CD8-positive, alpha-beta T cell (primary cell): ENCODE measurements at regions of chr17 and their contacts with region 1.

Region 1: GRCh38 chr17:30021708-30022317 is 80.4 kb downstream of the EFCAB5 start:
- DNase-seq: peak in 6 of 9 experiments; percentile 3 to 68 (median 31)
- ATAC-seq: peak; percentile 76
- H3K4me3 ChIP-seq: no peak overlapping the region
- H3K4me3 Mint-ChIP-seq: no peak overlapping the region
- H3K27ac ChIP-seq: no peak overlapping the region
- H3K27ac Mint-ChIP-seq: no peak overlapping the region
- H3K4me1 ChIP-seq: no peaks in the 10 kb centered on the region
- H3K4me1 Mint-ChIP-seq: peaks cover 2% of the 10 kb centered on the region
- H3K27me3 ChIP-seq: no peaks in the 10 kb centered on the region
- H3K27me3 Mint-ChIP-seq: peaks cover 5% of the 10 kb centered on the region
- CTCF ChIP-seq: peak; percentile 88

Region 2: DNA sequence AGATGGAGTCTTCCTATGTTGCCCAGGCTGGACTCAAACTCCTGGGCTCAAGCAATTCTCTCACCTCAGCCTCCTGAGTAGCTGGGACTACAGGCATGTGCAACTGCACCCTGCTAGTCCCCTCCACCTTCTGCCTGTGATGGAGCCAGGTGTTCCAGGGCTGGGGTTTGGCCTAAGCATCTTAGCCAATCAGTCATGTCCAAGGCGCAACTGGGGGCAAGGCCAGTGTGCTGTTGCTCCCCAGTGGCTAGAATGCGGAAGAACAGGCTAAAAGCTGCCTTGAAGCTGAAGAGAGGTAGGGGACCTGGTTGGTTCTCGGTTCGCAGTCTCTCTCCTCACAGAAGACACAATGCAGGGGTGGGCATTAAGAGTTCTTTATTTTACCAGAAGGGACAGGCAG is 1142.8 kb before region 1 on chr17:
- CTCF ChIA-PET with region 1: no interaction called
- POLR2A ChIA-PET with region 1: no interaction called
- intact Hi-C with region 1: no loop called
- DNase-seq: peak in 1 of 9 experiments; percentile 26
- ATAC-seq: no peak
- H3K4me3 ChIP-seq: no peak overlapping the region
- H3K4me3 Mint-ChIP-seq: no peak overlapping the region
- H3K27ac ChIP-seq: no peak overlapping the region
- H3K27ac Mint-ChIP-seq: no peak overlapping the region
- H3K4me1 ChIP-seq: no peaks in the 10 kb centered on the region
- H3K4me1 Mint-ChIP-seq: no peaks in the 10 kb centered on the region
- H3K27me3 ChIP-seq: no peaks in the 10 kb centered on the region
- H3K27me3 Mint-ChIP-seq: no peaks in the 10 kb centered on the region
- CTCF ChIP-seq: no peak

Region 3: DNA sequence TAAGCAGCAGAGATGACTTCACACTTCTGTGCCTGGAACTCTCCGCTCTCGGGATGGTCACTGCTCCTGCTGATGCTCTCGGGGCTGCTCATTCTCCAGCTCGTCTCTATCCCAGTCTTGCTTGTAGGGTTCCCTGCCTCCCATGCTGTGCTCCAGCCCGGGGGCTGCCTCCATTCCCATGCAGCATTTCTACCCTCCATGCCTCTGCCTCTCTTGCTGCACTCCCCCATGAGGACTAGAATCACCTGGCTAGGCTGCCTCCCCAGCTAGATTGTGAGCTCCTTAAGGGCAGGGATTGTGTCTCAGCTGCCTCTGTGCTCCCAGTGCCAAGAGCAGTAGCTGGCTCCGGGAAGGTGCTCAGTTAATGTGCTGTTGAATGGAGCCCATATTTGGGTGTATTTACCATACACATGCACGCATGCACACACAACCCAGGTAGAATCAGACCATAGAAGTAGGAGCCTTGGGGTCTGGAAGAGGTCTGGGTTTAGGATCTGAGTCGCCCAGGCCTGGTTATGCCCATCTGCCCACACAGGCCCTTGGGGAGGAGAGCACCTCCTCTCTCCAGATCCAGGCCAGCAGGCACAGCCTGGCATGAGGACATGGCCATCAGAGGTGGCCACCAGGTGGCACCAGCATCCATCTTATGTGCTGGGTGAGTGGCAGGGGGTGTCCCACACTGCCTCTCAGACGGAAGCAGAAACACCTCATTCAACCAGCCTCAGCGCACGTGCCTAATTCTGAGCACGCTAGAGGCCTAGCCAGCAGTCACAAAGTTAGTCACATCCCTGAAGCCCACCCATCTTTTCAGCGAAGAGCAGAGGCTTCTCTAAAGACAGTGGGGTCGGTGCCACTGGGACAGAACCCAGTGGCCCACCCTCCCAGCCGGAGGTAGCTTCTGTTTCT is 441.7 kb before region 1 on chr17:
- CTCF ChIA-PET with region 1: no interaction called
- POLR2A ChIA-PET with region 1: no interaction called
- intact Hi-C with region 1: loop called (anchors 1 to 2 kb)
- DNase-seq: peak; percentile 81 to 95 (median 92)
- ATAC-seq: peak; percentile 99
- H3K4me3 ChIP-seq: no peak overlapping the region
- H3K4me3 Mint-ChIP-seq: no peak overlapping the region
- H3K27ac ChIP-seq: no peak overlapping the region
- H3K27ac Mint-ChIP-seq: peak overlapping the region; percentile 34
- H3K4me1 ChIP-seq: peaks cover 13% of the 10 kb centered on the region
- H3K4me1 Mint-ChIP-seq: peaks cover 11% of the 10 kb centered on the region
- H3K27me3 ChIP-seq: no peaks in the 10 kb centered on the region
- H3K27me3 Mint-ChIP-seq: no peaks in the 10 kb centered on the region
- CTCF ChIP-seq: peak; percentile 80

Region 4: GRCh38 chr17:29640413-29640812 is 381.4 kb before region 1 on chr17:
- CTCF ChIA-PET with region 1: interaction called, 3 read pairs
- POLR2A ChIA-PET with region 1: no interaction called
- intact Hi-C with region 1: loop called in 1 of 2 experiments (anchors 2 kb)
- DNase-seq: no peak
- ATAC-seq: no peak
- H3K4me3 ChIP-seq: no peak overlapping the region
- H3K4me3 Mint-ChIP-seq: no peak overlapping the region
- H3K27ac ChIP-seq: no peak overlapping the region
- H3K27ac Mint-ChIP-seq: peak overlapping the region; percentile 61
- H3K4me1 ChIP-seq: no peaks in the 10 kb centered on the region
- H3K4me1 Mint-ChIP-seq: peaks cover 17% of the 10 kb centered on the region
- H3K27me3 ChIP-seq: no peaks in the 10 kb centered on the region
- H3K27me3 Mint-ChIP-seq: no peaks in the 10 kb centered on the region
- CTCF ChIP-seq: no peak

Region 5: GRCh38 chr17:29844339-29845048 is 177.3 kb before region 1 on chr17:
- CTCF ChIA-PET with region 1: no interaction called
- POLR2A ChIA-PET with region 1: no interaction called
- intact Hi-C with region 1: no loop called
- DNase-seq: peak in 1 of 9 experiments; percentile 6
- ATAC-seq: no peak
- H3K4me3 ChIP-seq: no peak overlapping the region
- H3K4me3 Mint-ChIP-seq: no peak overlapping the region
- H3K27ac ChIP-seq: no peak overlapping the region
- H3K27ac Mint-ChIP-seq: no peak overlapping the region
- H3K4me1 ChIP-seq: no peaks in the 10 kb centered on the region
- H3K4me1 Mint-ChIP-seq: no peaks in the 10 kb centered on the region
- H3K27me3 ChIP-seq: no peaks in the 10 kb centered on the region
- H3K27me3 Mint-ChIP-seq: no peaks in the 10 kb centered on the region
- CTCF ChIP-seq: no peak

Region 6: GRCh38 chr17:29977836-29978235 is 44.0 kb before region 1 on chr17:
- CTCF ChIA-PET with region 1: no interaction called
- POLR2A ChIA-PET with region 1: no interaction called
- intact Hi-C with region 1: loop called in 1 of 2 experiments (anchors 1 kb)
- DNase-seq: no peak
- ATAC-seq: no peak
- H3K4me3 ChIP-seq: no peak overlapping the region
- H3K4me3 Mint-ChIP-seq: no peak overlapping the region
- H3K27ac ChIP-seq: no peak overlapping the region
- H3K27ac Mint-ChIP-seq: no peak overlapping the region
- H3K4me1 ChIP-seq: no peaks in the 10 kb centered on the region
- H3K4me1 Mint-ChIP-seq: no peaks in the 10 kb centered on the region
- H3K27me3 ChIP-seq: no peaks in the 10 kb centered on the region
- H3K27me3 Mint-ChIP-seq: no peaks in the 10 kb centered on the region
- CTCF ChIP-seq: no peak